Activated CD8-positive, alpha-beta memory T cell treated with anti-CD3 and anti-CD28 coated beads, Interleukin-2, amount 10 ng/mL, durations not matched to agents 7 days and 5 days (primary cell): ENCODE measurements at regions of chr14 and their contacts with region 1.

Region 1: GRCh38 chr14:55354500-55354899 is 57.1 kb downstream of the ATG14 start:
- DNase-seq: peak; percentile 72
- ATAC-seq: peak; percentile 92
- H3K4me3 Mint-ChIP-seq: no peak overlapping the region
- H3K27ac Mint-ChIP-seq: peak overlapping the region; percentile 49
- H3K4me1 Mint-ChIP-seq: peaks cover 19% of the 10 kb centered on the region
- H3K27me3 Mint-ChIP-seq: no peaks in the 10 kb centered on the region

Region 2: DNA sequence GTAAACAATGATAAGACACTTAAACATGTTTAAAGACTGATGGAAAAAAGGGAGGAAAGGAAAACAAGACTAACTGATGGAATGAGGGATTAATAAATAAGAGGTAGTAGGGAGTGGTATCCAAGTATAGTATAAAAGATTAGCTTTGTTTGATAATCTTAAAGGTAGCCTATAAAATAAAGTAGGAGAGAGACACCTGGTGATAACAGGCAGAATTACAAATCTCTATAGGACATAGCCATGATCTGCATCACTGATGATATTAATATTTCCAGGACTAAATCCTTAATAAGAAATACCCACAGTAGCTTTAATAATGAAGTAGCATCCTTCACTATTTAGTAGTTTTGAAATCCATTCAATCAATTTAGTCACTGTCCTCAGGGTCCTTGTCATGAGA is 193.5 kb before region 1 on chr14:
- CTCF ChIA-PET with region 1: no interaction called
- DNase-seq: no peak
- ATAC-seq: peak; percentile 45
- H3K4me3 Mint-ChIP-seq: no peak overlapping the region
- H3K27ac Mint-ChIP-seq: no peak overlapping the region
- H3K4me1 Mint-ChIP-seq: peaks cover 19% of the 10 kb centered on the region
- H3K27me3 Mint-ChIP-seq: no peaks in the 10 kb centered on the region

Region 3: GRCh38 chr14:55212634-55213033 is 141.9 kb before region 1 on chr14:
- CTCF ChIA-PET with region 1: interaction called, 13 read pairs
- DNase-seq: no peak
- ATAC-seq: no peak
- H3K4me3 Mint-ChIP-seq: no peak overlapping the region
- H3K27ac Mint-ChIP-seq: no peak overlapping the region
- H3K4me1 Mint-ChIP-seq: peaks cover 3% of the 10 kb centered on the region
- H3K27me3 Mint-ChIP-seq: peaks cover 4% of the 10 kb centered on the region

Region 4: GRCh38 chr14:55228261-55228660 is 126.2 kb before region 1 on chr14:
- CTCF ChIA-PET with region 1: no interaction called
- DNase-seq: no peak
- ATAC-seq: no peak
- H3K4me3 Mint-ChIP-seq: no peak overlapping the region
- H3K27ac Mint-ChIP-seq: no peak overlapping the region
- H3K4me1 Mint-ChIP-seq: no peaks in the 10 kb centered on the region
- H3K27me3 Mint-ChIP-seq: peaks cover 30% of the 10 kb centered on the region

Region 5: DNA sequence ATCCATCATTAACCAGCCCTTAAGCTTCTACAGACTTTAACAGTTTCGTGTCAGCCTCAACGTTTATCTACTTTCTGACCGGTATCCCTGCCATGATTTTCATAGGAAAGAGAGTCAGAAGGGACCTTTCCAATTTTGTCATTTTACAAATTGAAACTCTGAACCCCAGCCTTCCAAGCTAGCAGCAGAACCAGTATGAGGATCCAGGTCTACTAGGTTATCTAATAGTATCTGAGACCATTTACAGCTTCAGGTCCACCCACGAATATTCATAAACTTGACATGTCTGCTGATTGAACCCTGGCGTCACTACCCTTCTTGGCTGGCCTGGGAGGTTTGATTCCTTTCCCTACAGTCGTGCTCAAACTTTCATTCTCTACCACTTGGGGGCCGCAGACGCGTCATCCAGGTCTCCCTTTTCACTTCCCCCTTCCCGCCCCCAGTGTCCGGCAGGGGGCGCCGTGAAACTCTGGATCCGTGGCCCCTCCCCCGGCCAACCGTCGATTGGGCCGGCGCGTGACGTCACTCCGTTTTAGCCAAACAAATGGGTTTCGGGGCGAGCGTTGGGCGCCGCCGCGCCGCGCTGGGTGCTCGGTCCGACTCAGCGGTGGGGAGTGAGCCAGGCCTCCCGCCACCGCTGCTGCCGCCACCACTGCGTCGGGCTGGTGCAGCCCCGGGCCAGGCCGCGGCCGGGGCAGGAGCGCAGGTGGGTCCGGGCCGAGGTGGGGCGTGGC is 83.5 kb before region 1 on chr14 and contains the start of gene FBXO34:
- CTCF ChIA-PET with region 1: interaction called, 100 read pairs
- DNase-seq: peak; percentile 98
- ATAC-seq: peak; percentile 86
- H3K4me3 Mint-ChIP-seq: peak within 1 kb of the TSS; percentile 90
- H3K27ac Mint-ChIP-seq: peak within 1 kb of the TSS; percentile 94
- H3K4me1 Mint-ChIP-seq: peaks cover 37% of the 10 kb centered on the region
- H3K27me3 Mint-ChIP-seq: no peaks in the 10 kb centered on the region
- total RNA-seq, gene FBXO34: 18.6 to 22.1 TPM

Region 6: GRCh38 chr14:55333711-55334485 is 20.6 kb before region 1 on chr14:
- CTCF ChIA-PET with region 1: interaction called, 69 read pairs
- DNase-seq: no peak
- ATAC-seq: peak; percentile 37
- H3K4me3 Mint-ChIP-seq: peak overlapping the region; percentile 76
- H3K27ac Mint-ChIP-seq: peak overlapping the region; percentile 91
- H3K4me1 Mint-ChIP-seq: peaks cover 69% of the 10 kb centered on the region
- H3K27me3 Mint-ChIP-seq: no peaks in the 10 kb centered on the region

Region 7: DNA sequence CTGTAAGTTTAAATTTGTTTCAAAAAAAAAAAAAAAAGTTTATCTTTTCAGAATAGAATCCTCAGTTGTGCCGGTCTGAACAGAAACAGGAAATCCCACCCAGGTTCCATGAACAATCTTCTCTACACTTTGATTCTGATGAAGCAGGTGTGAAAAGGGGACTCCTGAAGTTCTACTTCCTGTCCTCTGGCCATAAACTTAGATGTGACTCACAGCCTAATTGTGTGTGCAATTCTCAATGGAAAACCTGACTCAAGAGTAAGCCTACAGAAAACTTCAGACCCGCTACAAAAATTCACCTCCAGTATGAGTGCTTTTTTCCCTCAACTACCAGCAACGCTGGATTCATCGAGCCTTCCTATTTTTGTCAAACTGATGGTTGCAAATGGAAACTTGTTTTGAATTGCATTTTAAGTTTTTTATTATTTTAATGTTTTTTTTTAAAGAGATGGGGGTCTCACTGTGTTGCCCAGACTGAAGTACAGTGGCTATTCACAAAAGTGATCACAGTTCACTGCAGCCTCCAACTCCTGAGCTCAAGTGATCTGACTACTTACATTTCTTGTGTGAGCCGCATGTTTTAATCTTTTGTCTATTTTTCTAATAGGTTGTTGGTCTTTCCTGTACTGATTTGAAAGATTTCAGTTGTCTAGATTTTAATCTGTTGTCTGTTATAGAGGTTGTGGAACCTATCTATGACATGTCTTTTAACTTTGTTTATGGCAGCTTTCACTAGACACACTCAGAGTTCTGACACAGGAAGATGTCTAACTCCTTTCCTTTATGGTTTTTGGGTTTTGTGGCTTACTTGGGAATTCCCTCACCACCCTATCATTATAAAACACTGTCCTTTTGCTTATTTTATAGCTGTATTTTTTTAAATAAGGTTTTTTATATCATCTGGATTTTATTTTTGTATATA is 19.5 kb after region 1 on chr14:
- CTCF ChIA-PET with region 1: interaction called, 10 read pairs
- DNase-seq: peak; percentile 46
- ATAC-seq: peak; percentile 81
- H3K4me3 Mint-ChIP-seq: peak overlapping the region; percentile 19
- H3K27ac Mint-ChIP-seq: peak overlapping the region; percentile 80
- H3K4me1 Mint-ChIP-seq: peaks cover 18% of the 10 kb centered on the region
- H3K27me3 Mint-ChIP-seq: no peaks in the 10 kb centered on the region